ENCODE measurements at regions of chr21 and their contacts with region 1.

Region 1: DNA sequence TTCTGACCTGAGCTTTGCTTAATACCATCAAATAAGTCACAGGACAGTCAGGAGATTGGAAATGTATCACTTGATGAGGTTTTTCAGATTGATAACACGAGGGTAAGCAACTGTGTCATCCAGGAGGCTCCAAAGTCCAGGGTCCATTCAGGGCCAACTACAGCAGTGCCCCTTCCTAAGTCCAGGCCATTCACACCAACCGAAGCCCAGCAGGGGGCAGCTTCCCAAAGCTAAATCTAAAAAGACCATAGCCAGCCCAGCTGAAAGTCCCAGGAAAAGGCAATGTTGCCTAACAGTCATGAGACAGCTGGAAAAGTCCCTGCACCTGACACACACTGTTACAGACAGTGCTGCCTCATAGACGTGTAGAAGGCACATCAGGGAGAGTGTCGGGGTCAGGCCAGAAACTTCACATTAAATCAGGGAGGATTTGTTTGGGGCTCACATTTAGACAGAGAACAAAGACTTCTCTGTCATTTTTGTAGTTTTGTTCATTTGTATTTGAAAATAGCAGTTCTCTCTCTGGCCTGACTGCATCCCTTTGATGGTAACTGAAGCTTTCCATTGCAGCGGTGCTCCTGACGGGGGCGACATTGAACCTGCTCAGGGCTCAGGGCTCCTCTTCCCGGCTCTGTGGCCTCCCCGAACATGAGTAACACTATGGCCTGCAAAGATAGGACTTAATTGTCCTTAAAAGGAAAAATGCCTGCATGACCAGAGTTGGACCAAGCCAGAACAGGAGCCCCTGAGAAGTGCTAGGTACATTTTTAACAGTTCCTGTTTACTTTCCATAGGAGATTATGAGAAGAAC is 200.4 kb downstream of the NRIP1 start:
- DNase-seq: peak; percentile 73 to 80
- H3K4me3 ChIP-seq: no peak overlapping the region
- H3K4me3 Mint-ChIP-seq: no peak overlapping the region
- H3K27ac Mint-ChIP-seq: no peak overlapping the region
- H3K4me1 ChIP-seq: peaks cover 23% of the 10 kb centered on the region
- H3K4me1 Mint-ChIP-seq: peaks cover 28% of the 10 kb centered on the region
- H3K27me3 ChIP-seq: no peaks in the 10 kb centered on the region
- H3K27me3 Mint-ChIP-seq: no peaks in the 10 kb centered on the region
- CTCF ChIP-seq: peak; percentile 42 to 47

Region 2: GRCh38 chr21:14403681-14404318 is 460.6 kb before region 1 on chr21:
- CTCF ChIA-PET with region 1: no interaction called
- POLR2A ChIA-PET with region 1: no interaction called
- intact Hi-C with region 1: loop called (anchors 5 kb)
- DNase-seq: peak in 1 of 2 experiments; percentile 28
- H3K4me3 ChIP-seq: no peak overlapping the region
- H3K4me3 Mint-ChIP-seq: no peak overlapping the region
- H3K27ac Mint-ChIP-seq: no peak overlapping the region
- H3K4me1 ChIP-seq: no peaks in the 10 kb centered on the region
- H3K4me1 Mint-ChIP-seq: no peaks in the 10 kb centered on the region
- H3K27me3 ChIP-seq: no peaks in the 10 kb centered on the region
- H3K27me3 Mint-ChIP-seq: no peaks in the 10 kb centered on the region
- CTCF ChIP-seq: peak; percentile 55 to 66

Region 3: DNA sequence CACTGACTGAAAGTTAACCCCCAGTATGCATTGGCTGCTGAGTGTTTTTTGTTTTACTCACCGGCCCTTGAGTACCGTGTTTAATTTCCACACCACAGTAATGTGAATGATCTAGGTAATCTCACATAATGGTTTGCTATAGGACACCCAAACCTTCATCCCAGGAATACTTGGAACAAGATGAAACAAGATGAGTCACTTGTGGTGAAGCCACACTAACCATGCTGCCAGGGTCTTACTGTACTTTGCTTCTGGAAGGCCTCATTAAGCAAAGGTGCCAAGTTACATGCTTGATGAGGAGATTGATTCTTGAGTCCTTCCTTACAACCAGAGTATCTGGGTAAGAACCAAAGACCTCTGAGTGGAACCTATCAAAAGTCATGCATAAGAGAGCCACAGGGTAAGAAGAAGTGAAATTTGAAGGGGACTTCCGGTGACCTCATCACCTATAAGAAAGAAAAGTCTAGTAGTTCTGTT is 37.1 kb after region 1 on chr21:
- CTCF ChIA-PET with region 1: no interaction called
- POLR2A ChIA-PET with region 1: no interaction called
- intact Hi-C with region 1: no loop called
- DNase-seq: no peak
- H3K4me3 ChIP-seq: no peak overlapping the region
- H3K4me3 Mint-ChIP-seq: no peak overlapping the region
- H3K27ac Mint-ChIP-seq: no peak overlapping the region
- H3K4me1 ChIP-seq: peaks cover 4% of the 10 kb centered on the region; the same call in 1 of the 2 replicates
- H3K4me1 Mint-ChIP-seq: no peaks in the 10 kb centered on the region
- H3K27me3 ChIP-seq: no peaks in the 10 kb centered on the region
- H3K27me3 Mint-ChIP-seq: no peaks in the 10 kb centered on the region
- CTCF ChIP-seq: no peak

Region 4: GRCh38 chr21:14942801-14943490 is 78.5 kb after region 1 on chr21:
- CTCF ChIA-PET with region 1: interaction called, 7 read pairs
- POLR2A ChIA-PET with region 1: no interaction called
- intact Hi-C with region 1: loop called (anchors 5 kb)
- DNase-seq: peak in 1 of 2 experiments; percentile 7
- H3K4me3 ChIP-seq: no peak overlapping the region
- H3K4me3 Mint-ChIP-seq: no peak overlapping the region
- H3K27ac Mint-ChIP-seq: no peak overlapping the region
- H3K4me1 ChIP-seq: no peaks in the 10 kb centered on the region
- H3K4me1 Mint-ChIP-seq: peaks cover 8% of the 10 kb centered on the region
- H3K27me3 ChIP-seq: no peaks in the 10 kb centered on the region
- H3K27me3 Mint-ChIP-seq: no peaks in the 10 kb centered on the region
- CTCF ChIP-seq: no peak

Region 5: GRCh38 chr21:15112858-15113257 is 248.4 kb after region 1 on chr21:
- CTCF ChIA-PET with region 1: no interaction called
- POLR2A ChIA-PET with region 1: no interaction called
- intact Hi-C with region 1: no loop called
- DNase-seq: no peak
- H3K4me3 ChIP-seq: no peak overlapping the region
- H3K4me3 Mint-ChIP-seq: no peak overlapping the region
- H3K27ac Mint-ChIP-seq: no peak overlapping the region
- H3K4me1 ChIP-seq: no peaks in the 10 kb centered on the region
- H3K4me1 Mint-ChIP-seq: no peaks in the 10 kb centered on the region
- H3K27me3 ChIP-seq: no peaks in the 10 kb centered on the region
- H3K27me3 Mint-ChIP-seq: no peaks in the 10 kb centered on the region
- CTCF ChIP-seq: no peak

Region 6: GRCh38 chr21:15210235-15210739 is 345.9 kb after region 1 on chr21:
- CTCF ChIA-PET with region 1: no interaction called
- POLR2A ChIA-PET with region 1: no interaction called
- intact Hi-C with region 1: loop called (anchors 5 kb)
- DNase-seq: peak; percentile 62 to 73
- H3K4me3 ChIP-seq: no peak overlapping the region
- H3K4me3 Mint-ChIP-seq: no peak overlapping the region
- H3K27ac Mint-ChIP-seq: no peak overlapping the region
- H3K4me1 ChIP-seq: peaks cover 23% of the 10 kb centered on the region
- H3K4me1 Mint-ChIP-seq: peaks cover 12% of the 10 kb centered on the region
- H3K27me3 ChIP-seq: no peaks in the 10 kb centered on the region
- H3K27me3 Mint-ChIP-seq: no peaks in the 10 kb centered on the region
- CTCF ChIP-seq: peak in 1 of 2 experiments; percentile 35

Region 7: DNA sequence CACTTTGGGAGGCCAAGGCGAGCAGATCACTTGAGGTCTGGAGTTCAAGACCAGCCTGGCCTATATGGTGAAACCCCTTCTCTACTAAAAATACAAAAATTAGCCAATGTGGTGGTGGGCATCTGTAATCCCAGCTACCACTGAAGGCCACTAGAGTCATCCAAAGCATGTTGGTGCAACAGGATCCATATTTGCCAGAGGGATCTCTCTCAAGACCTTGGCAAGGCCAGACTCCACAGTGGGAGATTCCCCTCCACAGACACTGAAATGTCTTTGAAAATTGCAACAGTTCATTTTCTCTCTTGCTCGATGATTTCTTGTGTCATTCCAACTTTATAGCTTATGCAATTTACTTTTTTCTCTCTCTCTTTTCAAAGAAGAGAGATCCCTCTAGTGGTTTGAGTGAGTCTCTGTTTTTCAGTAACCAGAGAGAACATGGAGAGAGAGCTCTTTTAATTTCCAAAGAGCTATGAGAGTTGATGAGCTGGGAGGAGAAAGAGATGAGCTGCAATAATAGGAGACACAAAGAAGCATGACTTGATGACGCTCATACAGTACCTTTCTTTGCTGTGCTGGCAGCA is 688.6 kb after region 1 on chr21:
- CTCF ChIA-PET with region 1: interaction called, 4 read pairs
- POLR2A ChIA-PET with region 1: no interaction called
- intact Hi-C with region 1: loop called (anchors 5 kb)
- DNase-seq: no peak
- H3K4me3 ChIP-seq: no peak overlapping the region
- H3K4me3 Mint-ChIP-seq: no peak overlapping the region
- H3K27ac Mint-ChIP-seq: no peak overlapping the region
- H3K4me1 ChIP-seq: no peaks in the 10 kb centered on the region
- H3K4me1 Mint-ChIP-seq: peaks cover 7% of the 10 kb centered on the region
- H3K27me3 ChIP-seq: no peaks in the 10 kb centered on the region
- H3K27me3 Mint-ChIP-seq: no peaks in the 10 kb centered on the region
- CTCF ChIP-seq: peak; percentile 43 to 47

Measured in Caco-2 (cell line).